ENCODE measurements at regions of chr1 and their contacts with region 1.

Region 1: GRCh38 chr1:23908493-23909341 is 4.4 kb downstream of the CNR2 start:
- DNase-seq: peak; percentile 59
- ATAC-seq: peak; percentile 63
- H3K4me3 Mint-ChIP-seq: peak overlapping the region; percentile 98
- H3K27ac Mint-ChIP-seq: peak overlapping the region; percentile 99
- H3K4me1 Mint-ChIP-seq: peaks cover 94% of the 10 kb centered on the region
- H3K27me3 Mint-ChIP-seq: no peaks in the 10 kb centered on the region
- CTCF ChIP-seq: no peak

Region 2: GRCh38 chr1:23718482-23718881 is 190.2 kb before region 1 on chr1:
- CTCF ChIA-PET with region 1: no interaction called
- POLR2A ChIA-PET with region 1: interaction called, 10 read pairs
- intact Hi-C with region 1: no loop called
- DNase-seq: no peak
- ATAC-seq: no peak
- H3K4me3 Mint-ChIP-seq: no peak overlapping the region
- H3K27ac Mint-ChIP-seq: peak overlapping the region; percentile 75
- H3K4me1 Mint-ChIP-seq: peaks cover 53% of the 10 kb centered on the region
- H3K27me3 Mint-ChIP-seq: no peaks in the 10 kb centered on the region
- CTCF ChIP-seq: no peak

Region 3: DNA sequence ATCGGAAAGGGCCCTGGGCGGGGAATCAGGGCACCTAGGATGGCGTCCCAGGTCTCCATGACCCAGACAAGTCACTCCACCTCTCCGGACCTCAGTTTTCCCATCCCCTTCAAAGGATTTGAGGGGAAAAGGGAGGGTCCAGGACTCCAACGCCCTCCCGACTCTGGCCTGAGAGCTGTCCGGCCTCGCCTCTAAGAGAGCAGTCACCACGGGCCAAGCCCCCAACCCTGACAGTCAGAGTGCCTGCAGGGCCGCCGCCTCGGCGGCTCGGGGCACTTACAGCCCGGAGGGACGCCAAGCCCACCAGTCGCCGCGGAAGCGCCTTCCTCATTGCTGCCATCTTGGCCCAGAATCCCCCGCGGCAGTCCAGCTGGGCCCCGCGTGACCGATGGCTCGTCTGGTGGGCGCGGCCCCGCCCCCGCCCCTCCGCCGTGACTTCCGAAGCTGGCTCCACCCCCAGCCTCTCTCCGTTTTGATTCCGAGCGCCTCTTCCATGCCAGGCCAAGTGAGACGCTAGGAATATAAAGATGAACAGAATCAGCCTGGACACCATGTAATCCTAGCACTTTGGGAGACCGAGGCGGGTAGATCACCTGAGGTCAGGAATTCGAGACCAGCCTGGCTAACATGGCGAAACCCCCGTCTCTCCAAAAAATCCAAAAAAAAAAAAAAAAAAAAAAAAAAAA is 83.5 kb before region 1 on chr1 and contains the start of gene HMGCL:
- CTCF ChIA-PET with region 1: interaction called, 3 read pairs
- POLR2A ChIA-PET with region 1: interaction called, 43 read pairs
- intact Hi-C with region 1: no loop called
- DNase-seq: peak; percentile 81
- ATAC-seq: peak; percentile 95
- H3K4me3 Mint-ChIP-seq: peak within 1 kb of the TSS; percentile 96
- H3K27ac Mint-ChIP-seq: peak within 1 kb of the TSS; percentile 95
- H3K4me1 Mint-ChIP-seq: peaks cover 20% of the 10 kb centered on the region
- H3K27me3 Mint-ChIP-seq: no peaks in the 10 kb centered on the region
- CTCF ChIP-seq: no peak
- total RNA-seq, gene HMGCL: 21.0 and 30.7 TPM in 2 replicates

Region 4: GRCh38 chr1:23875382-23875781 is 33.3 kb before region 1 on chr1:
- CTCF ChIA-PET with region 1: no interaction called
- POLR2A ChIA-PET with region 1: interaction called, 27 read pairs
- intact Hi-C with region 1: no loop called
- DNase-seq: no peak
- ATAC-seq: no peak
- H3K4me3 Mint-ChIP-seq: no peak overlapping the region
- H3K27ac Mint-ChIP-seq: no peak overlapping the region
- H3K4me1 Mint-ChIP-seq: peaks cover 10% of the 10 kb centered on the region
- H3K27me3 Mint-ChIP-seq: no peaks in the 10 kb centered on the region
- CTCF ChIP-seq: no peak

Region 5: DNA sequence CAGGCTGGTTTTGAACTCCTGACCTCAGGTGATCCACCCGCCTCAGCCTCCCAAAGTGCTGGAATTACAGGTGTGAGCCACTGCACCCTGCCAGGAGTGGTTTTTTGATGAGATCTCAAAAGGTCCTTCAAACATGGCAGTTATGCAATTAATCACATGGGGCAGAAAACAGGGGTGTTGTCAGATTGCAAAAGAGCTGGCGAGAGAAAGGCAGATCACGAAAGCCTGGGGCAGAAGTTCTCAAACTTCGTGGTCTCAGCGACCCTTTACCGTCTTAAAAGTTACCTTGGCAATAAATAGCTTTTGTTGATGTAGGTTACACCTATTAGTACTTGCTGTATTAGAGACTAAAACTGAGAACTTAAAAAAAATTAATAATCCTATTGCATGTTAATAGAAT is 11.6 kb before region 1 on chr1:
- CTCF ChIA-PET with region 1: interaction called, 4 read pairs
- POLR2A ChIA-PET with region 1: interaction called, 208 read pairs
- intact Hi-C with region 1: loop called (anchors 1 kb)
- DNase-seq: no peak
- ATAC-seq: no peak
- H3K4me3 Mint-ChIP-seq: peak overlapping the region; percentile 42
- H3K27ac Mint-ChIP-seq: peak overlapping the region; percentile 83
- H3K4me1 Mint-ChIP-seq: peaks cover 87% of the 10 kb centered on the region
- H3K27me3 Mint-ChIP-seq: no peaks in the 10 kb centered on the region
- CTCF ChIP-seq: no peak